Activated CD4-positive, alpha-beta T cell treated with anti-CD3 and anti-CD28 coated beads for 36 hours (primary cell): ENCODE measurements at regions of chr1 and their contacts with region 1.

Region 1: GRCh38 chr1:148334339-148335130 is 148.6 kb downstream of the PPIAL4G start:
- DNase-seq: peak; percentile 91
- ATAC-seq: peak; percentile 87
- H3K4me3 Mint-ChIP-seq: peak overlapping the region; percentile 85
- H3K27ac Mint-ChIP-seq: peak overlapping the region; percentile 100
- H3K4me1 Mint-ChIP-seq: peaks cover 32% of the 10 kb centered on the region
- H3K27me3 Mint-ChIP-seq: no peaks in the 10 kb centered on the region

Region 2: DNA sequence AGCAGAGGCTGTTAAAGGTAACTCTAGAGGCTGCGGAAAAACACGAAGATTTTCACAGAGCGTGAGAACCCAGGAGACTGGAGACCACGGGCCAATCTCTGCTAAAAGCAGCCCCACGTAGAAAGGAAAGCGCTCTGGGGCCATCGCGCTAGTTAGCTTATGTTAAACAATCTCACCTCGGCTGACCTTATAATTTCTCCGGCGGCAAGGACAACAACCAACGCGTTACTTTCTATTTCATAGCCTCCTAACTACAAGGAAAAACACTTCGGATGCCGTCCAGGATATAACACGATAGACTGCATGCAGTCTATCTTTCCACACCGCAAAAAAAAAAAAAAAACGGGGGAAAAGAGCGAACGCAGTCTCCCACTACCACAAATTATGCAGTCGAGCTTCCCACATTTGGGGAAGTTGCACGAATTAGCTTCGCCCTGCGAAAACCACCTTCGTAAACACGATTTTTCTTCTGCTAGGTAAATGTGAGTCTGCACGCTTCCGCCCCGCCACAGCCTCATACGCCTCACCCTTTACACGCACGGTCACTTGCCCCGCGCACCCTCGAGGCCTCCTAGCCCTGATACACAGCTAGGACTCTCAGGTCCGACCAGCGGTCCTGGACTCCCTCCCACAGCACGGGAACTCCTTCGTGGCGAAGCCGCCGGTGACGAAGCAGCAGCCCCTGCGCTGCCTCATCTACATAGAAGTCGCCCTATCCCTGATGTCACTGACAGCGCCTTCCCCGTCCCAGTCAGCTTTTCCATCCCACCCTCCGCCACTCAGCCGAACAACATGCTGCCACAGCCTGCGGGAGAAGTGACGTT is 1250.0 kb before region 1 on chr1:
- CTCF ChIA-PET with region 1: no interaction called
- POLR2A ChIA-PET with region 1: interaction called, 22 read pairs
- intact Hi-C with region 1: no loop called
- DNase-seq: peak; percentile 95
- ATAC-seq: peak; percentile 88
- H3K4me3 Mint-ChIP-seq: peak overlapping the region; percentile 80
- H3K27ac Mint-ChIP-seq: peak overlapping the region; percentile 100
- H3K4me1 Mint-ChIP-seq: peaks cover 29% of the 10 kb centered on the region
- H3K27me3 Mint-ChIP-seq: peaks cover 44% of the 10 kb centered on the region

Region 3: DNA sequence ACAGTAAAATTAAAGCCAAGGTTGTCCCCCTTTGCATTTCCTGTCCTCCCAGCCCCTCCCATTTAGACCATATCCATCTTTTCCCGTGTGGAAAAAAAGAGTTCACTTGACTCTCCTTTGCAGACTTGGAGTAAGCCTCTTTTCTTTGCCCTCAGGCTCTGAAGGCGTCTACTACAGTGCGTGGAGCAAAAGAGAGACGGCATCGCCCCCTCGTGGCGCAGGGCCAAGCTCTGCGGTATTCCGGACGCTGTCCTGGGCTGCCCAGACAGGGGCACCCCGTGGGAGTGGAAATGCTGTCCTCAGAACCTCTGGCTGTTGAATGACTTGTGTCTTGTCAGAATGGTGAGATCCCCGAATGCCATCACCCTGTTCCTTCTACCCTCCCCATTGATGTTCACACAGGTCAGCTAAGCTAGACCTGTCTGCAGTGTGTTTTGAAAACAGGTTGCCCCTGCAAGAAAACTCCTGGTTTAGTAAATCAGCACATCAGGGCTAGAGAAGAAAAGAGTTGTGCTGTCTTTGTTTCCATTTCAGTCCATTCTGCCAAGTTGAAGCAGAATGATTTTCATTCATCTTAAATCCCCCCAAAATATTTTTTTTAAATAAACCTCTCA is 444.3 kb before region 1 on chr1:
- CTCF ChIA-PET with region 1: no interaction called
- POLR2A ChIA-PET with region 1: no interaction called
- intact Hi-C with region 1: no loop called
- DNase-seq: peak; percentile 85
- ATAC-seq: peak; percentile 91
- H3K4me3 Mint-ChIP-seq: no peak overlapping the region
- H3K27ac Mint-ChIP-seq: no peak overlapping the region
- H3K4me1 Mint-ChIP-seq: peaks cover 2% of the 10 kb centered on the region
- H3K27me3 Mint-ChIP-seq: no peaks in the 10 kb centered on the region

Region 4: DNA sequence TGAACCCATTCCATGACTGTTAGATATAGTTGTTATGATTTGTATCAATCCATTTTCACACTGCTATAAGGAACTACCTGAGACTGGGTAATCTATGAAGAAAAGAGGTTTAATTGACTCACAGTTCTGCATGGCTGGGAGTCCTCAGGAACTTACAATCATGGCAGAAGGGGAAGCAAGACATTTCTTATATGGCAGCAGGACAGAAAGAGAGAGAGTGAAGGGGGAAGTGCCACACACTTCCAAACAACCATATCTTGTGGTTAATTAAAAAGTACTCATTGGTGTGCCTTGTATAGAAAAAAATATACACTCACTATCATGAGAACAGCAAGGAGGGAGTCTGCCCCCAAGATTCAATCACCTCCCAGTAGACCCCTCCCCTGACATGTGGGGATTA is 44.9 kb before region 1 on chr1:
- CTCF ChIA-PET with region 1: no interaction called
- POLR2A ChIA-PET with region 1: interaction called, 3 read pairs
- intact Hi-C with region 1: loop called in 1 of 2 experiments (anchors 5 kb)
- DNase-seq: no peak
- ATAC-seq: no peak
- H3K4me3 Mint-ChIP-seq: no peak overlapping the region
- H3K27ac Mint-ChIP-seq: no peak overlapping the region
- H3K4me1 Mint-ChIP-seq: peaks cover 3% of the 10 kb centered on the region
- H3K27me3 Mint-ChIP-seq: peaks cover 6% of the 10 kb centered on the region

Region 5: GRCh38 chr1:148318123-148318903 is 16.2 kb before region 1 on chr1:
- CTCF ChIA-PET with region 1: interaction called, 5 read pairs
- POLR2A ChIA-PET with region 1: interaction called, 26 read pairs
- intact Hi-C with region 1: loop called (anchors 1 to 2 kb)
- DNase-seq: peak; percentile 86
- ATAC-seq: peak; percentile 86
- H3K4me3 Mint-ChIP-seq: peak overlapping the region; percentile 78
- H3K27ac Mint-ChIP-seq: peak overlapping the region; percentile 92
- H3K4me1 Mint-ChIP-seq: peaks cover 33% of the 10 kb centered on the region
- H3K27me3 Mint-ChIP-seq: peaks cover 18% of the 10 kb centered on the region

Region 6: DNA sequence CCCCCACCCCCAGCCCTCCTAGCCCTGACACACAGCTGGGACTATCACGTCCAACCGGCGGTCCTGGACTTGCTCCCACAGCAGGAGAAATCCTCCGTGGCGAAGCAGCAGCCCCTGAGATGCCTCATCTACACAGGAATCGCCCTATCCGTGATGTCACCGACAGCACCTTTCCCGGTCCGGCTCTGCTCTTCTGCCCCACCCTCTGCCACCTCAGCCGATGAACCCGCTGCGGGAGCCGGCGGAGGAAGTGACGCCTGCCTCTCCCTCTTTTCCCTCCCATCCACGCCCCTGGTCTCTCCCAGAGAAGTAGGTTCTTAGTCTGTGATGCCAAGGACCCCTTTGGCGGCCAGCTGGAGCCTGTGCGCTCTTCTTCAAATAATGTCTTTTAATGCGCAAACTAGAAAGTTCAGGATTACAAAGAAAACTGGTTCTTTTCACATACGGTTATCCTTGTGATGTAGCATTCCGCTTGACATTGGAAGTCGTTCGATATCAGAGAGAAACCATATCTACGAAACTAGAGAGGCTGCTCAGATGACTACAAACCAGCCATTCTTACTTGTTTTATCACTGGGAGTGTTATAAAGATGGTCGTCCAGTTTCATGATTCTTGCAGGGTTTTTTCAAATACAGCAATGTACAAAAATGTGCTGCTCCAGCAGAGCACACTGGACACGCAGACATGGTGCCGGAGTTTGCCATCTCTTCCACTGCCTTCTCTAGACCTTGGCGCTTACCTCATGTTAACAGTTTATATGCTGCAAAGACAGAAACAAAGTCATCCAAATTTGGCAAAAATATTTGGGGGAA is 28.3 kb after region 1 on chr1:
- CTCF ChIA-PET with region 1: no interaction called
- POLR2A ChIA-PET with region 1: interaction called, 18 read pairs
- intact Hi-C with region 1: loop called (anchors 1 to 2 kb)
- DNase-seq: peak; percentile 75
- ATAC-seq: peak; percentile 67
- H3K4me3 Mint-ChIP-seq: peak overlapping the region; percentile 74
- H3K27ac Mint-ChIP-seq: peak overlapping the region; percentile 80
- H3K4me1 Mint-ChIP-seq: peaks cover 44% of the 10 kb centered on the region
- H3K27me3 Mint-ChIP-seq: peaks cover 3% of the 10 kb centered on the region

Region 7: DNA sequence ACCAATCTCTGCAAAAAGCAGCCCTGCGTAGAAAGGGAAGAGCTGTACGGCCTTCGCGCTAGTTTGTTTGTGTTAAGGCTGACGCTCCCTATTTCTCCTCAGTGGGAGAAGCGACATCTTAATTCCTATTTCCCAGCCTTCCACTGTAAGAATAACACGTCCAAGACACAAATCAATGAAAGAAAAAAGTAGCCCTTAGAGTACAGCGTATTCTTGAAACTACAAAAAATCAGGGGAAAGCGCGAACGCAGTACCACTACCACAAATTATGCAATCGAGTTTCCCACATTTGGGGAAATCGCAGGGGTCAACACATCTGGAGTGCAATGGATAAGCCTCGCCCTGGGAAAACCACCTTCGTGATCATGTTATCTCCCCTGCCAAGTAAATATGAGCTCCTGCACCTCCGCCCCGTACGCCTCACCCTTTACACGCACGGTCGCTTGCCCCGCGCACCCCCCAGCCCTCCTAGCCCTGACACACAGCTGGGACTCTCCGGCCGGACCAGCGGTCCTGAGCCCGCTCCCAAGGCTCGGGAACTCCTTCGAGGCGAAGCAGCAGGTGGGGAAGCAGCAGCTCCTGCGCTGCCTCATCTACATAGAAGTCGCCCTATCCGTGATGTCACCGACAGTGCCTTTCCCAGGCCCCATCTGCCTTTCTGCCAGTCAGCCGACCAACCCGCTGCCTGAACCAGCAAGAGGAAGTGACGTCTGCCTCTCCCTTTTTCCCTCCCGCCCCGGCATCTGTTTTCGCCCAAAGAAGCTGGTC is 53.9 kb after region 1 on chr1:
- CTCF ChIA-PET with region 1: no interaction called
- POLR2A ChIA-PET with region 1: interaction called, 54 read pairs
- intact Hi-C with region 1: loop called in 1 of 2 experiments (anchors 2 kb)
- DNase-seq: peak; percentile 94
- ATAC-seq: peak; percentile 88
- H3K4me3 Mint-ChIP-seq: peak overlapping the region; percentile 76
- H3K27ac Mint-ChIP-seq: peak overlapping the region; percentile 99
- H3K4me1 Mint-ChIP-seq: peaks cover 39% of the 10 kb centered on the region
- H3K27me3 Mint-ChIP-seq: no peaks in the 10 kb centered on the region